ENCODE measurements at regions of chr10 and their contacts with region 1.

Region 1: DNA sequence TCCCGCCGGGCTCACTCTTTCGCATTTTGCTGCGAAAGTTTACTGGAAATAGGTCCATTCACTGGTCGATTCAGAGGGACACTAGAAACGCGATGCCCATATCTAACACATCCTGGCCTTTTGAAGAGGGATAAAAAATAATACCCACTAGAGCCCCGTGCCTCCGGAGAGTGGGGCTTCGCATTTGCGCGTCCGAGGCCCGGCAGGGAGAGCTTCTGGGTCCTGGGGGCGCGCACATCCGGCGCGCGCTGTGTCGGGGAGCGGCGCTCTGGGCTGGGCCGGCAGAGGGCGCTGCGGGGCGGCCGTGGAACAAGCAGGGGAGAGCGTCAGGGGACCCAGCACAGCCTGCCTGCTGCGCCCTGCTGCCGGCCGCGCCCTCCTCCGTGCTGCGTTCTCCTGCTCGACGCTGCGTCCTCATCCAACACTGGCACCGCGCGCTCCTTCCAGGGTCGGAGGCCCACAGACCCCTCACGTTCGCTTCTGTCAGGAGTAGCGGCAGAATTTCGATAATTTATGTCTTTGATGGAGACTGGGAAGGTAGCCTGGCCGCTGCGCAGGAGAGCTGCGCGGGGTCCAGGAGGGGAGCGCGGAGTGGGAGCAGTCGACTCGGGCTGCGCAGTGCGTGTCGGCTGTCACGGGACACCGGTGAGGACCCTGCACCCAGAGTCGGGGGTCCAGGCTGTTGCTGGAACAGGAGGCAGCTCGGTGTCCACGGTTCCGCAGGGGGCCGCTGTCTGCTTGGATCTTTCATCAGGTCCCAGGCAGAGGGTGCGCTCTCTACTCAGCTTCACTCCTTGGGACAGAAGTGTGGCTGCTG is 41.5 kb upstream of the ZNF32 start:
- DNase-seq: peak; percentile 91 to 96
- ATAC-seq: peak; percentile 98
- H3K4me3 ChIP-seq: peak overlapping the region; percentile 43 to 44
- H3K27ac ChIP-seq: peak overlapping the region in 1 of 2 donors; percentile 41
- H3K4me1 ChIP-seq: no peaks in the 10 kb centered on the region
- H3K27me3 ChIP-seq: no peaks in the 10 kb centered on the region

Region 2: GRCh38 chr10:43808136-43808535 is 118.0 kb after region 1 on chr10:
- intact Hi-C with region 1: loop called in 1 of 2 experiments (anchors 5 kb)
- DNase-seq: no peak
- ATAC-seq: no peak
- H3K4me3 ChIP-seq: no peak overlapping the region
- H3K27ac ChIP-seq: peak overlapping the region; percentile 45 to 90
- H3K4me1 ChIP-seq: peaks cover 5% of the 10 kb centered on the region in 2 donors
- H3K27me3 ChIP-seq: no peaks in the 10 kb centered on the region

Region 3: DNA sequence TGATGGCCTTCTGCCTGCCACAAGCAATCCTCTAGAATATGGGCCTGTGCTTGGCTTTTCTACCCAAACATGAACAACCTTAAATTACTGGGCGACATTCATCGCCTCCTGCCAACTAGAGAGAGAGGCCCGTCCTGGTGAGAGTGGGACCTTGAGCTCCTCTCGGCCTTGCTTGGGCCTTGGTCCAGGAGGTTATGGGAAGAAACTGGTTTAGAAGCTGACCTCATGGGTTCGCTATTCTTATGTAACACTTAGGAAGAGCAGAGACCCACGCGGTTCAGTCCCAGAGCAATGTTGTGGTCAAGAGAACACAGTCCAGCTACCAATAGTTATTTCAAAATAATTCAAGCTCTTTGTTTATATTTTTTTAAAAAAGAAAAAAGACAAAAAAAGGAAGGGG is 134.8 kb after region 1 on chr10:
- intact Hi-C with region 1: loop called in 1 of 2 experiments (anchors 10 kb)
- DNase-seq: peak; percentile 86 to 88
- ATAC-seq: peak; percentile 86
- H3K4me3 ChIP-seq: no peak overlapping the region
- H3K27ac ChIP-seq: peak overlapping the region; percentile 61 to 90
- H3K4me1 ChIP-seq: no peaks in the 10 kb centered on the region
- H3K27me3 ChIP-seq: no peaks in the 10 kb centered on the region

Region 4: DNA sequence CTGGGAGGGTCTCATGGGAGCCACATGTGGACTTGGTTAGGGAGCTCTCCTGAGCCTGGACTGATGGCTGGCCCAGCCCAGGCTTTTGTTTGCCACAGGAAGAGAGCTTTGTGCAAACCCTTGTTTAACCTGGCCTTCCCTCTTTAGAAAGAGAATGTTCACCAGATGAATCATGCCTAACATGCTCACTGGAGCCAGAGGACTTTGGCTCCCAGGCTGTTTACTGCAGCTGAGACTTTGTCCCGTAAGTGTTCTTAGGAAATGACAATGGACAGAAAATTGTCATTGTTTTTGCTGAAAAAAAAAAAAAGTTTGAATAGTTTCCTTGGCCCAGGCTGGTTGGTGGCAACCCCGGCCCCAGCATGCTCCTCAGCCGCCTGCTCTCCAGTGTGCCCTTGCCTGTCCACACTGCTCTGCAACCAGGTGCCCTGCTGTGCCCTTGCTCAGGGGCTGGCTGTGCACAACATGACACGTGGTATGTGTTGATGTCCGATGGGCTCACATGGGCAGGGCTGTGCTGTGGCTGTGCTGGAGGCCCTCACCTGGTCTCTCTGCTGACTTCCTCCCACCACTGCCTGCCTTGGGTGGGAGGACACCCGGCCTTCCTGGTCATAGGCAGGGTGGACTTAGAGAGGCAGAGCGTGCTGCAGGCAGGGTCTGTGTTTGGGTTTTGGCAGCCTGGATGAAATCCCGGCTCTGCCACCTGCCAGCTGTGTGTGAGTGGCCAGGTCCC is 173.9 kb after region 1 on chr10:
- intact Hi-C with region 1: loop called in 1 of 2 experiments (anchors 5 kb)
- DNase-seq: peak in 1 of 2 donors; percentile 71
- ATAC-seq: peak; percentile 86
- H3K4me3 ChIP-seq: no peak overlapping the region
- H3K27ac ChIP-seq: peak overlapping the region; percentile 49 to 94
- H3K4me1 ChIP-seq: peaks cover 4 to 16% of the 10 kb centered on the region in 2 donors
- H3K27me3 ChIP-seq: no peaks in the 10 kb centered on the region

Region 5: DNA sequence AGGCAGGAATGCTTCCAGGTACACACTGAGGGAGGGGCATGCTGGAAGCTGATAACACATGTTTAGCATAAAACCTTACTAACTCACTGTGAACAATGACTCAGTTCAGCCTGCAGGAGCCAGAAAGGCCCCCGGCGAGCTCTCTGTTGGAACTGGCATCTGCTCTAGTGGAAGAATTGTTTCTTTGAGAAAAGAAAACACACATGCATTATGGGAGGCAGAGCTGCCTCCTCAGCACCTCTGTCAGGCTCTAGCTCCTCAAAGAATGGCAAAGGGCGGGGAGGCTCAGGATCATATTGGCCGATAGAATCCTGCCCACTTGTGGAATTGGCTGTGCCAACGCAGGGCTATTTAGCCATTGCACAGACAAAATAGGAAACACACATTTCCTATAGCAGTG is 356.4 kb after region 1 on chr10:
- intact Hi-C with region 1: loop called in 1 of 2 experiments (anchors 5 kb)
- DNase-seq: no peak
- ATAC-seq: peak; percentile 37
- H3K4me3 ChIP-seq: no peak overlapping the region
- H3K27ac ChIP-seq: peak overlapping the region in 1 of 2 donors; percentile 32
- H3K4me1 ChIP-seq: peaks cover 0 to 2% of the 10 kb centered on the region in 2 donors
- H3K27me3 ChIP-seq: no peaks in the 10 kb centered on the region

Region 6: GRCh38 chr10:44310762-44311562 is 620.8 kb after region 1 on chr10:
- intact Hi-C with region 1: loop called (anchors 2 to 5 kb)
- DNase-seq: peak; percentile 92 to 95
- ATAC-seq: peak; percentile 96
- H3K4me3 ChIP-seq: no peak overlapping the region
- H3K27ac ChIP-seq: no peak overlapping the region
- H3K4me1 ChIP-seq: no peaks in the 10 kb centered on the region
- H3K27me3 ChIP-seq: no peaks in the 10 kb centered on the region

Region 7: GRCh38 chr10:44386546-44387052 is 696.4 kb after region 1 on chr10:
- intact Hi-C with region 1: loop called in 1 of 2 experiments (anchors 5 kb)
- DNase-seq: peak; percentile 74 to 90
- ATAC-seq: peak; percentile 90
- H3K4me3 ChIP-seq: no peak overlapping the region
- H3K27ac ChIP-seq: no peak overlapping the region
- H3K4me1 ChIP-seq: no peaks in the 10 kb centered on the region
- H3K27me3 ChIP-seq: no peaks in the 10 kb centered on the region

Measured in aorta (tissue), 5 donors.